Activated CD8-positive, alpha-beta T cell treated with anti-CD3 and anti-CD28 coated beads, Interleukin-2, amount 10 ng/mL, durations not matched to agents 7 days and 5 days (primary cell): ENCODE measurements at regions of chr17 and their contacts with region 1.

Region 1: GRCh38 chr17:29293890-29294579 is at the start of gene NUFIP2:
- DNase-seq: peak; percentile 99
- ATAC-seq: peak; percentile 92
- H3K4me3 Mint-ChIP-seq: peak within 1 kb of the TSS; percentile 97
- H3K27ac Mint-ChIP-seq: peak within 1 kb of the TSS; percentile 98
- H3K4me1 Mint-ChIP-seq: peaks cover 30% of the 10 kb centered on the region
- H3K27me3 Mint-ChIP-seq: no peaks in the 10 kb centered on the region
- total RNA-seq, gene NUFIP2: 60.3 to 64.5 TPM

Region 2: DNA sequence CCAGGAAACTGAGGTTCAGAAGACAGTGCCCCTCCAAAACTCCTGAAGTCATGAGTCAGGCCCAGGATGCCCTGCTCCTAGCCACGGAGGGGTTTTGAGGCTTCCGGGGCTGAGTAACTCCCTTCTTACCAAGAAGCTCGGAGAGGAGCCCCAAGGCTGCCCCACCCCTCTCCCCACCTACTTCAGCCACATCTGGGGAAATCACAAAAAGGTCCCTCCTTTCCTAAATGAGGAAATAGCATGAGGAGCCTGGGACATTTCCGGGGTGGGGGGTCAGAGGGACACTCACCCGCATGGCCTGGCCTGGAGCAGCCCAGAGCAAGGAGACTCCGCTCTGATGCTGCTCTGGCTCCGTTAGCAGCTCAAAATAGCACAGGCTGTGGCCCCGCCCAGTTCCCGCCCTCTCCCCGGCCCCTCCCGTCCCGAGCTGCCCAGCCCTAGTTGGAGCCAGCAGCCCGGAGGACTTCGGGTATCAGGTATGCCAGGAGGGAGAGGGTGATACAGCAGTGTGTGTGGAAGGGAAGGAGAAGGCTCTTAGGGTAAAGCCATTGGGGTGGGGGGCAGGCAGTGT is 153.9 kb before region 1 on chr17:
- CTCF ChIA-PET with region 1: interaction called, 20 read pairs
- POLR2A ChIA-PET with region 1: interaction called, 10 read pairs
- DNase-seq: peak; percentile 95
- ATAC-seq: peak; percentile 76
- H3K4me3 Mint-ChIP-seq: peak overlapping the region; percentile 92
- H3K27ac Mint-ChIP-seq: peak overlapping the region; percentile 98
- H3K4me1 Mint-ChIP-seq: peaks cover 70% of the 10 kb centered on the region
- H3K27me3 Mint-ChIP-seq: no peaks in the 10 kb centered on the region

Region 3: GRCh38 chr17:29252101-29252866 is 41.8 kb before region 1 on chr17:
- CTCF ChIA-PET with region 1: interaction called, 25 read pairs
- POLR2A ChIA-PET with region 1: interaction called, 3 read pairs
- DNase-seq: no peak
- ATAC-seq: no peak
- H3K4me3 Mint-ChIP-seq: no peak overlapping the region
- H3K27ac Mint-ChIP-seq: no peak overlapping the region
- H3K4me1 Mint-ChIP-seq: peaks cover 4% of the 10 kb centered on the region
- H3K27me3 Mint-ChIP-seq: no peaks in the 10 kb centered on the region

Region 4: GRCh38 chr17:29279397-29280070 is 14.5 kb before region 1 on chr17:
- CTCF ChIA-PET with region 1: interaction called, 27 read pairs
- POLR2A ChIA-PET with region 1: interaction called, 11 read pairs
- DNase-seq: no peak
- ATAC-seq: no peak
- H3K4me3 Mint-ChIP-seq: no peak overlapping the region
- H3K27ac Mint-ChIP-seq: no peak overlapping the region
- H3K4me1 Mint-ChIP-seq: peaks cover 46% of the 10 kb centered on the region
- H3K27me3 Mint-ChIP-seq: no peaks in the 10 kb centered on the region